GM12878 (cell line): ENCODE measurements at regions of chr1 and their contacts with region 1.

Region 1: GRCh38 chr1:94329986-94330385 is 88.2 kb upstream of the ABCD3 start:
- DNase-seq: no peak
- ATAC-seq: no peak
- H3K4me3 ChIP-seq: no peak overlapping the region
- H3K27ac ChIP-seq: no peak overlapping the region
- H3K4me1 ChIP-seq: peaks cover 19% of the 10 kb centered on the region
- H3K27me3 ChIP-seq: no peaks in the 10 kb centered on the region
- CTCF ChIP-seq: 0 out of 6 replicates have a peak, but pooled peaks of 2 of the 3 experiments have one; percentile 1 to 3
- EP300 ChIP-seq: no peak
- POLR2A ChIP-seq: no peak
- RAD21 ChIP-seq: peak; percentile 24; the same call in 1 of the 2 replicates

Region 2: GRCh38 chr1:94039514-94039870 is 290.5 kb before region 1 on chr1:
- CTCF ChIA-PET with region 1: interaction called, 119 read pairs
- POLR2A ChIA-PET with region 1: interaction called, 4 read pairs
- RAD21 ChIA-PET with region 1: interaction called, 21 read pairs
- SMC1A ChIA-PET with region 1: interaction called, 21 read pairs
- in situ Hi-C with region 1: no loop called
- intact Hi-C with region 1: no loop called
- DNase-seq: no peak
- ATAC-seq: peak; percentile 65
- H3K4me3 ChIP-seq: no peak overlapping the region
- H3K27ac ChIP-seq: no peak overlapping the region
- H3K4me1 ChIP-seq: peaks cover 6% of the 10 kb centered on the region; the same call in 1 of the 2 replicates
- H3K27me3 ChIP-seq: no peaks in the 10 kb centered on the region; a peak in 1 of 4 replicates
- CTCF ChIP-seq: peak; percentile 78 to 92 (median 86)
- EP300 ChIP-seq: no peak
- POLR2A ChIP-seq: no peak
- RAD21 ChIP-seq: peak; percentile 53

Region 3: GRCh38 chr1:94260635-94261387 is 69.2 kb before region 1 on chr1:
- CTCF ChIA-PET with region 1: interaction called, 3 read pairs
- POLR2A ChIA-PET with region 1: no interaction called
- RAD21 ChIA-PET with region 1: interaction called, 10 read pairs
- SMC1A ChIA-PET with region 1: interaction called, 5 read pairs
- in situ Hi-C with region 1: no loop called
- intact Hi-C with region 1: no loop called
- DNase-seq: no peak
- ATAC-seq: no peak
- H3K4me3 ChIP-seq: no peak overlapping the region
- H3K27ac ChIP-seq: no peak overlapping the region
- H3K4me1 ChIP-seq: no peaks in the 10 kb centered on the region
- H3K27me3 ChIP-seq: no peaks in the 10 kb centered on the region
- CTCF ChIP-seq: no peak
- EP300 ChIP-seq: no peak
- POLR2A ChIP-seq: no peak
- RAD21 ChIP-seq: no peak

Region 4: DNA sequence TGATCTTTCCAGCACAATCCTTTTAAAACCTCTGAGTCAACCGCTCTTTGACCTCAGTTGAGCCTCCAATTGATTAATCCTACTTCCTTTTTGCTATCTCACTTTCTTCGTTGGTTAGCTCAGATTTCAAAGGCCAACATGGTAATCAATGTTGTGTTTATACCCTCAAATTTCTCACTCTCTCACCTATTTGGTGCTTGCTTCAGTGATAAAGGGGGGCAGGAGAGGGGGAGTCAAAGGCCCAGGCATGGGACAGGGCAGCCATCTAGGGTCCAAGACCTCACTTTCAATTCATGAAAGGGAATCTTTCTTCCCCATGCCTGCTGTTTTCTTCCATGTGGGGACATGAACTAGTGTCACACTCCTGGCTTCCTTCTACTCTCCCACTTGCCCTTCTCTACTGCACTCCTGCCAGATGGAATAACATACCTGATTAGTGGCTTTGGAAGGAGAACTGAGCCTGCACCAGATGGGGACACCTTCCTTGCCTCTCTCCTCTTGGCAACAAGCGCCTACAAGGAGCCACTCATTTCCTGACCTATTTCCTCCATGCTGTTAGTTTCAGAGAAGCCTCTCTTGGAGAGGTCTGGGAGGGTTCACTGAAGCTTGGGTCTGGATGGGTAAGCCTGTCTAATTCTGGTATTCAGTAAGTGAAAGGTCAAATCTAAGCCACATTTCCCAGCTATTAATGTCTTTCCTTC is 19.3 kb before region 1 on chr1:
- CTCF ChIA-PET with region 1: no interaction called
- POLR2A ChIA-PET with region 1: no interaction called
- RAD21 ChIA-PET with region 1: no interaction called
- SMC1A ChIA-PET with region 1: no interaction called
- in situ Hi-C with region 1: no loop called
- intact Hi-C with region 1: loop called (anchors 2 kb)
- DNase-seq: no peak
- ATAC-seq: no peak
- H3K4me3 ChIP-seq: no peak overlapping the region
- H3K27ac ChIP-seq: no peak overlapping the region
- H3K4me1 ChIP-seq: no peaks in the 10 kb centered on the region
- H3K27me3 ChIP-seq: no peaks in the 10 kb centered on the region; a peak in 1 of 4 replicates
- CTCF ChIP-seq: no peak
- EP300 ChIP-seq: no peak
- POLR2A ChIP-seq: no peak
- RAD21 ChIP-seq: no peak